Right cardiac atrium (tissue), 5 donors: ENCODE measurements at regions of chr5 and their contacts with region 1.

Region 1: GRCh38 chr5:137498736-137499505 is at the start of gene SPOCK1:
- DNase-seq: peak; percentile 79 to 94 (median 90)
- ATAC-seq: peak; percentile 94 to 95
- H3K4me3 ChIP-seq: peak within 1 kb of the TSS; percentile 49
- H3K27ac ChIP-seq: no peak within 1 kb of the TSS
- H3K4me1 ChIP-seq: peaks cover 1% of the 10 kb centered on the region
- H3K27me3 ChIP-seq: no peaks in the 10 kb centered on the region
- total RNA-seq, gene SPOCK1: 107 to 186 (median 144) TPM

Region 2: GRCh38 chr5:136802383-136802782 is 696.5 kb before region 1 on chr5:
- intact Hi-C with region 1: loop called in 2 of 4 experiments (anchors 5 kb)
- DNase-seq: no peak
- ATAC-seq: no peak
- H3K4me3 ChIP-seq: no peak overlapping the region
- H3K27ac ChIP-seq: no peak overlapping the region
- H3K4me1 ChIP-seq: no peaks in the 10 kb centered on the region
- H3K27me3 ChIP-seq: no peaks in the 10 kb centered on the region

Region 3: DNA sequence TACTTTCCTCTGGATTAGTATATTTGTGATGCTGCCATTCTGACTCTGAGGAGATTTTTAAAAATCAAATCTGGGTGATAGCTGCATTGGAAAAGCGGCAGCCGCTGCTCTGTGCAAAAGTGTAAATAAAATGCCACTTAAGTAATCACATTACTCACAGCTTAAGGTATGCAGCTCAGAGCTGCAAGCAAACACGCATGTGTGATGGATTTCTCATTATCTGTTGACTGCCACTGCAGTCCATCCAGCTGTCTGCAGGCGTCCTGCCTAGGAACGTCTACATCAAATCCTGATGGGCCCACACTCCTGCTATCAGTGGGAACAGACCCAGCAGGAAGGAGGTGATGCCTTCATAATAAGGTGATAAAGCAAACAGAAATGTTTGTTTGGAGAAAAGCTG is 216.7 kb before region 1 on chr5:
- intact Hi-C with region 1: no loop called
- DNase-seq: peak in 2 of 3 donors; percentile 68 to 76
- ATAC-seq: peak; percentile 85 to 87
- H3K4me3 ChIP-seq: no peak overlapping the region
- H3K27ac ChIP-seq: peak overlapping the region; percentile 76
- H3K4me1 ChIP-seq: peaks cover 15% of the 10 kb centered on the region
- H3K27me3 ChIP-seq: no peaks in the 10 kb centered on the region

Region 4: DNA sequence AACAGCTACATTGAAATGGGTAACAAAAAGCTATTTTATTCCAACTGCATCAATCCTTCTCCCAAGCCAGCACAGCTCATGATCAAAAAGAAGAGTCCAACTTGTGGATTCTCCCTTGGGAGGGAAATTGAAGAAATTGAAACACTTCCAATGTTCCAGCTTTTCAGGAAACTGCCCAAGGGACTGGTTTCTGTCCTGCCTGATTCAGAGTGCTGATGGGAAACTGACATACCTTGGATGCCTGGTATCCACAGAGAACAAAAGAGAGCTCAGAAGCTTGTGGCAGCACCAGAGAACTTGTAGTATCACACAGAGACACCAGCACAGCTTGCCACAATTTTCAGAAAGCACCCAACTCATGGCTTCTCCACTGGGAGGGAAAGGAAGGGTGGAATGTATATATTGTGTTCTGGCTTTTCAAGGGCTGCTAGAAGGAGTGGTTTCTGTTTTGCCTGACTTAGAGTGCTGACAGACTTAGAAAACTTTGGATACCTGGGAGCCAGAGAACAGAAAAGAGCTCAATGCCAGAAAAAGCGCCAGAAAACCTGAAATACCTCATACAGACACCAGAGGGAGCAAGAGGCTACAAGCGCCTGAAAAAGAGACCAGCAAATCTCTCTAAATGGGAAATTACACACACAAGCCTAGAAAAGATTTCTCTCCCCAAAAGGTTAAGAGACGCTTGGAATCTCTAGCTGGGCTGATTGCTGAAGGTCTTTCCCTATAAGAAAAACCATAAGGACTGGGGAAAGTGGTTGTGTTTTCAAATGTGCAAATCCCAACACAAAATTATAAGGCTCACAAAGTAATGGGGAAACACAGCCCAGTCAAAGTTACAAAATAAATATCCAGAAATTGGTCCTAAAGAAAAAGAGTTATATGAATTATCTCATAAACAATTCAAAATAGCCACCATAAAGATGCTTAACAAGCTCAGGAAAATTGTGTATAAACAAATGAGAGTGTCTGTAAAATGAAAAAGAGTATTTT is 178.6 kb before region 1 on chr5:
- intact Hi-C with region 1: loop called (anchors 2 to 5 kb)
- DNase-seq: no peak
- ATAC-seq: peak in 1 of 2 donors; percentile 20
- H3K4me3 ChIP-seq: no peak overlapping the region
- H3K27ac ChIP-seq: no peak overlapping the region
- H3K4me1 ChIP-seq: peaks cover 14% of the 10 kb centered on the region
- H3K27me3 ChIP-seq: no peaks in the 10 kb centered on the region

Region 5: DNA sequence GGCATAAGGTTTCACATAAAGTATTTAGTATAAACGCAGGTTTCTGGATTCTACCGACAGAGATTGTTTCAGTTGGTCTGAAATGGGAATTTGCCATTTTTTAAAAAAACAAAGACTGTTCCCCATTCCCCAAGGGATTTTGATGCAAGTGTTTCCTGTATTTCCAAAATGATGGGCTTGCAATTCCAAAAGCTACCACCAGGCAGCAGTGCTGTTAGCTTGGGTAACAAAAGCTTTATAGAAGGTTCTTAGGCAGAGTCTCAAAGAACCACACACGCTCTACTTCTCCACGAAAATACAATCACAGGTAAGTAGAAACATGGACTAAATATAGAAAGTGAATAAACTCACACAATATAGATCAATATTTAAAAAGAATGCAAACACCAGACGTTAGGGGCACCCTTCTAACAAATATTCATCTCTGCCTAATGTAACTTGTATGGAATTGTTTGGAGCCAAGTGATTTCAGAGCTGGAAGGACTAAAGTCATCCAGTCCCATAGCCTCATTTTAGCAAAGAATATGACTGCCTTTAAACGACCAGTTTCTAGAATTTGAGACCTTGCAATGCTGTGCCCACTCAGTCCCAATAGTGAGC is 154.1 kb before region 1 on chr5:
- intact Hi-C with region 1: loop called in 2 of 4 experiments (anchors 10 kb)
- DNase-seq: no peak
- ATAC-seq: no peak
- H3K4me3 ChIP-seq: no peak overlapping the region
- H3K27ac ChIP-seq: no peak overlapping the region
- H3K4me1 ChIP-seq: peaks cover 13% of the 10 kb centered on the region
- H3K27me3 ChIP-seq: no peaks in the 10 kb centered on the region

Region 6: GRCh38 chr5:137357436-137357835 is 141.5 kb before region 1 on chr5:
- intact Hi-C with region 1: loop called in 1 of 4 experiments (anchors 10 kb)
- DNase-seq: no peak
- ATAC-seq: no peak
- H3K4me3 ChIP-seq: no peak overlapping the region
- H3K27ac ChIP-seq: no peak overlapping the region
- H3K4me1 ChIP-seq: no peaks in the 10 kb centered on the region
- H3K27me3 ChIP-seq: no peaks in the 10 kb centered on the region

Region 7: GRCh38 chr5:137431051-137431450 is 67.9 kb before region 1 on chr5:
- intact Hi-C with region 1: no loop called
- DNase-seq: no peak
- ATAC-seq: no peak
- H3K4me3 ChIP-seq: no peak overlapping the region
- H3K27ac ChIP-seq: no peak overlapping the region
- H3K4me1 ChIP-seq: no peaks in the 10 kb centered on the region
- H3K27me3 ChIP-seq: no peaks in the 10 kb centered on the region